ENCODE measurements at regions of chr4 and their contacts with region 1.

Region 1: DNA sequence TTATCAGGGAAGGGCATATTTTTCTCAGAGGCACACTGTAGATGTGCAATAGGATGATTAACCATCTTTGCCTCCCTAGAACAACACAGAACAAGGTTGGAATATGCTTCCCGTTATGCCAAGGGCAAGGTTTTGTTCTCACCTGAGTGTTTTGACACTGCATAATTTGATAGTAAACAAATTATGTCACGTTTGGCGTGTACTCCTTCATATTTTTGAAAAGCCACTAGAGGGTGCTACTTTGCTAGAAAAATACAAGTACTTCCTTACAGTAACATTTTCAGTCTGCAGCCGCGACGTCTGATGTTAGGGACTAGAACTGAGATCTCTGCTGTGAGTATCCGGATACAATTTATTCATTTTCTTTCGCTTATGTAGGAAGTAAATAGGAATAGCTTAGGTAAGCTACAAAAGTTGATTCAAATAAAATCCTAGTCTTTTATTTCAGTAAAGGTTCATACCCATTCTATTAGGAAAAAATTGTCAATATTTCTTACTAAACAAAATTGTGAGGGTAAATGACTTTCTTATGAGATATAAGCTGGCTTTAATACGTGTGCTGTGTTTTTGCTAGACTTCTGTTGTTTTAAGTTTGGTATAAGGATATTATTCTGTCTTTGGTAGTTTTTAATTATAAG is 181.1 kb upstream of the WDFY3 start:
- DNase-seq: peak; percentile 78
- H3K4me3 ChIP-seq: no peak overlapping the region
- H3K27ac ChIP-seq: no peak overlapping the region
- H3K4me1 ChIP-seq: 0 out of 2 replicates have a peak, but pooled peaks cover 3% of the 10 kb centered on the region
- H3K27me3 ChIP-seq: 0 out of 2 replicates have a peak, but pooled peaks cover 3% of the 10 kb centered on the region

Region 2: GRCh38 chr4:85747882-85748491 is 600.4 kb after region 1 on chr4:
- in situ Hi-C with region 1: loop called (anchors 5 kb)
- DNase-seq: peak; percentile 80
- H3K4me3 ChIP-seq: no peak overlapping the region
- H3K27ac ChIP-seq: 0 out of 2 replicates have a peak overlapping the region, but pooled peaks have one; percentile 21
- H3K4me1 ChIP-seq: peaks cover 18% of the 10 kb centered on the region
- H3K27me3 ChIP-seq: no peaks in the 10 kb centered on the region

Region 3: GRCh38 chr4:85968945-85969819 is 821.6 kb after region 1 on chr4:
- in situ Hi-C with region 1: loop called (anchors 25 kb)
- DNase-seq: peak; percentile 86
- H3K4me3 ChIP-seq: no peak overlapping the region
- H3K27ac ChIP-seq: peak overlapping the region; percentile 50
- H3K4me1 ChIP-seq: peaks cover 67% of the 10 kb centered on the region
- H3K27me3 ChIP-seq: no peaks in the 10 kb centered on the region

Region 4: DNA sequence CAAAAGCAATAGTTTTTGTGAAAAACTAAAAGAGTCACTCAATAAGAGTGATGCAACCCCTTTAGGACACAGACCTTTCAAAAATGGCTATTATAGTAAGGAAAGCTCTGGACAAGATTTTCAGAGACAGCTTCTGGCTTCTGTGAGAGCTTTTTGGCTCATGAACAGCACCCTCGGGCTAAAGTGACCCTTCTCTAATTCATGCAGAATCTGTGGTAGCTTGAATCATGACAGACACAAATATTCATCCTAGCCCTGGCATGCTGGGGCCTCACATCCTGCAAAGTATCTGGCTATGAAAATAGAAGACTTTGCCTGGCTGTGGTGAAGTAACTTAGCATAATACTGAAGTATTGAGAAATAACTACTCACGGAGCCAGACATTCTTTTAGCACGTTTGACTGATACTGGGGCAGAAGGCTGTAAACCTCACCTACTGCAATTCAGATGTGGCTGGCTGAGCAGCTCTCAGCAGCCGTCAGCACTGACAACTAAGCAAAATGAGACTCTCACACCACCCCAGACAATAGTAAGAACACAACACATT is 885.0 kb after region 1 on chr4:
- in situ Hi-C with region 1: no loop called
- DNase-seq: peak; percentile 93
- H3K4me3 ChIP-seq: peak overlapping the region; percentile 48
- H3K27ac ChIP-seq: peak overlapping the region; percentile 94
- H3K4me1 ChIP-seq: peaks cover 51% of the 10 kb centered on the region
- H3K27me3 ChIP-seq: no peaks in the 10 kb centered on the region

Measured in GM23248 (cell line).